Transverse colon (tissue), 4 donors: ENCODE measurements at regions of chr19 and their contacts with region 1.

Region 1: DNA sequence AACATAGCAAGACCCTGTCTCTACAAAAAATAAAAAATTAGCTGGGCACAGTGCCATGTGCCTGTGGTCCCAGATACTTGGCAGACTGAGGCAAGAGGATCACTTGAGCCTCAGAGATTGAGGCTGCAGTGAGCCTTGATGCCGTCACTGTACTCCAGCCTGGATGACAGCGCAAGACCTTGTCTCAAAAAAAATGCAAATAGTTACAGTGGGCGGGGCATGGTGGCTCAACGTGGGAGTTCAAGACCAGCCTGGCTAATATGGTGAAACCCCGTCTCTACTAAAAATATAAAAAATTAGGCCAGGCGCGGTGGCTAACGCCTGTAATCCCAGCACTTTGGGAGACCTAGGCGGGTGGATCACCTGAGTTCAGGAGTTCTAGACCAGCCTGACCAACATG is 8.5 kb downstream of the PGLS start:
- DNase-seq: no peak
- H3K4me3 ChIP-seq: no peak overlapping the region
- H3K27ac ChIP-seq: no peak overlapping the region
- H3K4me1 ChIP-seq: peaks cover 0 to 13% (median 0%) of the 10 kb centered on the region in 4 donors
- H3K27me3 ChIP-seq: no peaks in the 10 kb centered on the region
- CTCF ChIP-seq: no peak
- EP300 ChIP-seq: no peak
- POLR2A ChIP-seq: no peak

Region 2: GRCh38 chr19:16518483-16519229 is 1001.3 kb before region 1 on chr19:
- in situ Hi-C with region 1: no loop called
- intact Hi-C with region 1: loop called (anchors 5 kb)
- DNase-seq: no peak
- H3K4me3 ChIP-seq: no peak overlapping the region
- H3K27ac ChIP-seq: no peak overlapping the region
- H3K4me1 ChIP-seq: no peaks in the 10 kb centered on the region
- H3K27me3 ChIP-seq: no peaks in the 10 kb centered on the region
- CTCF ChIP-seq: no peak
- EP300 ChIP-seq: no peak
- POLR2A ChIP-seq: no peak

Region 3: DNA sequence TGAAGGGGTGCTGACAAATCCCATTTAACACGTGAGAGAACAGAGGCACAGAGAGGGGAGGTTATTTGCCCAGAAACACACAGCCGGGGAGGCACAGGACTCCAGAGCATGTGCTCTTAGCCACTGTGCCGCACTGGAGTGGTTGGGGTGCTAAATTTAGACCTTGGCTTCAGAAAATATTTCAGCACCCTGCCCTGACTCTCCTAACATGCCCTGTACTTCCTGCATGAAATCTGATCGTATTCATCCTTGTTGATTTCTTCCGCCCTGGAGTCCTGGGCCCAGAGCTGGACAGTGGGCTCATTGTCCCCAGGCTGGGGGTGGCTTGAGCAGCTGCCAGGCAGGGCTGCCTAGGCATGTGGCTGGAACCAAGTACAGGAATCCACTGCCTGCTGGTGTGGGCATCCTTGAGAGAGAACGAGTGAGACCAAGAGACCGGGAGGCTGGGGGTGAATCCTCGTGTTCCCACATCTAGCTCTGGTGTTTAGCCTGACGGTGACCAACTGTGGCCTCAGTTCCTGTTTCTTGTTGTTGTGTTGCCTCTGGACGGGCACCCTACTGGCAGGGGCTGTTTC is 44.3 kb before region 1 on chr19:
- in situ Hi-C with region 1: no loop called
- intact Hi-C with region 1: no loop called
- DNase-seq: peak; percentile 31
- H3K4me3 ChIP-seq: no peak overlapping the region
- H3K27ac ChIP-seq: peak overlapping the region; percentile 3 to 56 (median 38)
- H3K4me1 ChIP-seq: peaks cover 8 to 24% (median 12%) of the 10 kb centered on the region in 4 donors
- H3K27me3 ChIP-seq: no peaks in the 10 kb centered on the region
- CTCF ChIP-seq: no peak
- EP300 ChIP-seq: no peak
- POLR2A ChIP-seq: no peak

Region 4: GRCh38 chr19:17641181-17641580 is 121.2 kb after region 1 on chr19:
- in situ Hi-C with region 1: no loop called
- intact Hi-C with region 1: no loop called
- DNase-seq: no peak
- H3K4me3 ChIP-seq: no peak overlapping the region
- H3K27ac ChIP-seq: no peak overlapping the region
- H3K4me1 ChIP-seq: no peaks in the 10 kb centered on the region
- H3K27me3 ChIP-seq: no peaks in the 10 kb centered on the region
- CTCF ChIP-seq: no peak
- EP300 ChIP-seq: no peak
- POLR2A ChIP-seq: no peak